AG04449 (cell line): ENCODE measurements at regions of chr5 and their contacts with region 1.

Region 1: DNA sequence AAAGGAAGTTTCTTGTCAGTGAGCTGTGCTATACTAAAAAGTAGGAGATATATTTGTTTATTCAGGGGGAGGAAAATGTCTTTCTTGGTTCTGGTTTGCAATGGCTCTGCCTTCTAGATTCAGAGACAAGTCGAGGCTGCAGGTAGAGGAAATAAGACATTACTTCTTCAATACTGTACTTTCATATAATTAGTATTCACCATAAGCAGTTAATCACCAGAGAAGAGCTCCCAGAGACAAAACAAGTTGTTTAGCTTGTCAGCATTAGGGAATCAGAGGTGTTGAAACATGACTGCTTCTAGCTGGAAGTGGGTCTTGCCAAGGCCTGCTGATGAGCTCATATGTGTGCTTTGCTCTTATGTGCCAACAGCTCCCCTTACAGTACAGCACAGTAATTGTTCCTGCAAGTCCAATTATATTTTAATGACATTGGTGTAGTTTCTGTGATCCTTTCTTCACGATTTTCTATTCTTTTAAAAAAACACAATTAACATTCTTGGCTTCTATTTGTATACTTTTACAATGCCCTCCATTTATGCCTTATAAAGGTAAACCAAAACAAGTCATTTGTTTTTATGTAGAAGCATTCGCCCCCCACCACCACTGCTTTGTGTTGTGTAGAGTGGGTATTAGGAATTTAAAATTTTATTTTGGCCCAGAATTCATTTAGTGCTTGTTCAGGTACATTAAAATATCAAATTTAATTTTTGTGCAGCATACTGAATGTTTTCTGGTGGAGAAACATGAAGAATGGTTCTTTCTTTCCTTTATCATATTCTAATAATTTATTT is 112.2 kb downstream of the RPS23 start:
- DNase-seq: peak; percentile 85
- H3K4me3 ChIP-seq: no peak overlapping the region
- CTCF ChIP-seq: peak; percentile 67

Region 2: DNA sequence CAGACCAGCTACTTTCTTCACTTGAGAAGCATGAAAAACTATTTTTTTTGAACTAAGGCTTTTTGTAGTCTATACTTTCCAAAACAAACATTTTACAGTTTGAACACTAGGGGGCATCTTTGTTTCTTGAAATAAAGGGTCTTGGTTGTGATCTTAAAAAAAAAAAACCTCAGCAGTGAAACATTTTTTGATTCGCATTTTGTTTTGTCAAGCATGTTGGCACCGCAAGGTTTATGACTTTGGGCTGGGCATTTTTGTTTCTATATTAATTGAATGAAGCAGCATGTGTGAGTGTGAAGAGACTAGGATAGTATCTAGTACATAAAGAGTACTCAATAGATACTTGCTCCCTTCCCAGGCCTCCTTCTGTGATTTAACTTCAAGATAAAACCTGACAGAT is 740.4 kb before region 1 on chr5:
- CTCF ChIA-PET with region 1: interaction called, 24 read pairs
- POLR2A ChIA-PET with region 1: no interaction called
- DNase-seq: no peak
- H3K4me3 ChIP-seq: no peak overlapping the region
- CTCF ChIP-seq: no peak

Region 3: GRCh38 chr5:81506900-81507588 is 658.9 kb before region 1 on chr5:
- CTCF ChIA-PET with region 1: interaction called, 19 read pairs
- POLR2A ChIA-PET with region 1: no interaction called
- DNase-seq: peak; percentile 71
- H3K4me3 ChIP-seq: no peak overlapping the region
- CTCF ChIP-seq: peak; percentile 81

Region 4: GRCh38 chr5:81513982-81514381 is 652.0 kb before region 1 on chr5:
- CTCF ChIA-PET with region 1: interaction called, 19 read pairs
- POLR2A ChIA-PET with region 1: no interaction called
- DNase-seq: no peak
- H3K4me3 ChIP-seq: no peak overlapping the region
- CTCF ChIP-seq: no peak

Region 5: GRCh38 chr5:81851481-81852178 is 314.3 kb before region 1 on chr5:
- CTCF ChIA-PET with region 1: interaction called, 34 read pairs
- POLR2A ChIA-PET with region 1: interaction called, 13 read pairs
- DNase-seq: peak; percentile 69
- H3K4me3 ChIP-seq: peak overlapping the region; percentile 54
- CTCF ChIP-seq: no peak

Region 6: GRCh38 chr5:81856948-81857928 is 308.7 kb before region 1 on chr5:
- CTCF ChIA-PET with region 1: interaction called, 34 read pairs
- POLR2A ChIA-PET with region 1: interaction called, 13 read pairs
- DNase-seq: no peak
- H3K4me3 ChIP-seq: no peak overlapping the region
- CTCF ChIP-seq: no peak

Region 7: GRCh38 chr5:82129723-82130285 is 36.1 kb before region 1 on chr5:
- CTCF ChIA-PET with region 1: no interaction called
- POLR2A ChIA-PET with region 1: no interaction called
- DNase-seq: no peak
- H3K4me3 ChIP-seq: no peak overlapping the region
- CTCF ChIP-seq: no peak

Region 8: DNA sequence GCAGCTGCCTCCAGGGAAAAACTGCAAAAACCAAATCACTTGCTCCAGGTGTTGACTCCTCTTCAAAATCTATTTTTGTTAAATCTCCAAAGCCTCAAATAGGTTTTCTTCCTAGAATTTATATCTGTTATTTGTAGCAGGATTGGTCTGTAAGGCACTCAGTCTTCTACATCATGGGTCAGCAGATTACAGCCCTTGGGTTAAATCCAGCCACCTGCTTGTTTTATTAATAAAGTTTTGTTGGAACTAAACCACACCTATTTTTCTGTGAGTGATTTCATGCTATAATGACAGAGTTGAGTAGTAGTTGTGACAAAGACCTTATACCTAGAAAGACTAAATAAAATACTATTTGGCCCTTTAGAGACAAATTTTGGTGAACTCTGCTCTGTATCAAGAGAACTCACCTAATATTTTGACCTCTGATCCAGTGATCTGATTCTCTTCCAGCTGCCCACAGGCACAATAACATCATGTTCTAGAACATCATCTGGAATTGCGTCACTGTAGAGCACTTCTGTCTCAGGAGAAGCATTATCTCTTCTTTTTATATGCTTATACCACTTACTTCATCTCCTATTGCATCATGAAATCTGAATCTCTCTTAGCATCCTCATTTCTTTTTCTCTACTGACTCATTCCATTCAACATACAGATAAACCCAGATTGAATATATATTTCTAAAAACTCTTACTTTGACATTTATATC is 17.9 kb before region 1 on chr5:
- CTCF ChIA-PET with region 1: interaction called, 16 read pairs
- POLR2A ChIA-PET with region 1: no interaction called
- DNase-seq: no peak
- H3K4me3 ChIP-seq: no peak overlapping the region
- CTCF ChIP-seq: no peak